GM12878 (cell line): ENCODE measurements at regions of chr11 and their contacts with region 1.

Region 1: DNA sequence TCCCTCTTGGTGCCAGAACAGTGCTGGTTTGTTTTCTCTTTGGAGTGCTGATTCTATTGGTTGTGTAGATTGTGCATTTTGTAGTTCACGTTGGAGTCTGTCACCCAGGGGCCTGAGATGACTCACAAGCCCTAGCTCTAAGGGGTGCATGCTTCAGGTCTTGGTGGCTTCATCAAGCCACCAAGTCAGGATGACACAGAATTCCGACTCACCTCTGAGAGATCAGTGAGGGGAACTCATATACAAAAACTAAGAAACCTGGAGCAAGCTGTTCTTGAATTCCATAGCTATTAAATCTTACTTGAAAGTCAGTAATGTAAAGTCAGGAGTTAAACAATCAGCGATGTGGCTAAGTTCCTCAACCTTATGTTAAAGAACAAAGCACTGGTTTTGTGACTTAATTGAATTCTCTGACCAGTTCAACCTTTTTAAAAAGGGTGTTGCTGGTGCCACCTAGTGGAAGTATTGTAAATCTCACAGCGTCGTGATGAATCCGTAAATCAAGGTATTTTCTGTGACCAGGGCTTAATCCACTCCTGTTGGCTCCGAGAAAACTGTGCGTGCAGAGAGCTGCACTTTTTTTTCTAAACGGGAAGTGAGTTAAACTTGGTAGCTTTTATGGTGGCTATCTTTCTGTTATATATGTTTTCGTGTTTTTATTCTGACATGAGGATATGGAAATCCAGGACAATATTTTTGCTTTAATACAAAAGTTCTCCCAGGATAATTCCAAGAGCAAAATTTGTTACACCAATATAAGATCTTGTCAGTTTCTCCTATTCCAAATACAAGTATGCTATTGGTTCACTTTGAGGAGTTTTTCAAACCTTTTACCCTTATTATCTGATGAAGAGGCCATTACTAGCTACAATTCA is 14.6 kb downstream of the MMP13 start:
- DNase-seq: peak; percentile 37
- ATAC-seq: peak; percentile 92
- H3K4me3 ChIP-seq: no peak overlapping the region
- H3K27ac ChIP-seq: no peak overlapping the region
- H3K4me1 ChIP-seq: no peaks in the 10 kb centered on the region
- H3K27me3 ChIP-seq: no peaks in the 10 kb centered on the region
- CTCF ChIP-seq: peak; percentile 63 to 83 (median 79)
- EP300 ChIP-seq: no peak
- POLR2A ChIP-seq: no peak
- RAD21 ChIP-seq: peak; percentile 81

Region 2: DNA sequence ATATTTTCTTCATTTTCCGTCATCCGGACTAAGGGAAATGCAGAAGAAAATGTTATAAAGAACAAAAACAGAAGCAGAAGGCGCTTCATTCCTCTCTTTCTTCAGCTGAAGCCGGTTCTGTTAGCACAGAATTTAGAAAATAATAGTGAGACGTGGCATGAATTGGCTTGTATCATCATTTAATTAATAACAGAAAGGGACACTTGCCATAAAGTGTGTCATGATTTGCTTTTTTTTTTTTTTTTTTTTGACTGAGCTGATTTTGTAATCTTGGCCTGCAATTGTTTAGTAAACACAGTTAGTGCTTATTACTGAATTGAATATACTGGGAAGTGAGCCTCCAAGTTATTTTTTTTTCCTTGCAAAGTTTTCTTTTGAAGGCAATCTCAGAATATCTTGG is 235.3 kb before region 1 on chr11 and contains the start of gene MMP27:
- CTCF ChIA-PET with region 1: no interaction called
- POLR2A ChIA-PET with region 1: no interaction called
- RAD21 ChIA-PET with region 1: no interaction called
- SMC1A ChIA-PET with region 1: no interaction called
- in situ Hi-C with region 1: no loop called
- intact Hi-C with region 1: no loop called
- DNase-seq: no peak
- ATAC-seq: no peak
- H3K4me3 ChIP-seq: no peak within 1 kb of the TSS
- H3K27ac ChIP-seq: no peak within 1 kb of the TSS
- H3K4me1 ChIP-seq: no peaks in the 10 kb centered on the region
- H3K27me3 ChIP-seq: peaks cover 0 to 2% of the 10 kb centered on the region in 2 experiments; a peak in 1 of 4 replicates
- CTCF ChIP-seq: no peak
- EP300 ChIP-seq: no peak
- POLR2A ChIP-seq: no peak
- RAD21 ChIP-seq: no peak
- polyA plus RNA-seq, gene MMP27: not detected

Region 3: GRCh38 chr11:102794447-102794781 is 146.5 kb before region 1 on chr11:
- CTCF ChIA-PET with region 1: interaction called, 17 read pairs
- POLR2A ChIA-PET with region 1: no interaction called
- RAD21 ChIA-PET with region 1: interaction called, 4 read pairs
- SMC1A ChIA-PET with region 1: interaction called, 13 read pairs
- in situ Hi-C with region 1: no loop called
- intact Hi-C with region 1: loop called (anchors 1 kb)
- DNase-seq: no peak
- ATAC-seq: peak; percentile 99
- H3K4me3 ChIP-seq: no peak overlapping the region
- H3K27ac ChIP-seq: no peak overlapping the region
- H3K4me1 ChIP-seq: no peaks in the 10 kb centered on the region
- H3K27me3 ChIP-seq: no peaks in the 10 kb centered on the region; a peak in 1 of 4 replicates
- CTCF ChIP-seq: peak; percentile 57 to 66 (median 57)
- EP300 ChIP-seq: no peak
- POLR2A ChIP-seq: no peak
- RAD21 ChIP-seq: peak; percentile 55

Region 4: DNA sequence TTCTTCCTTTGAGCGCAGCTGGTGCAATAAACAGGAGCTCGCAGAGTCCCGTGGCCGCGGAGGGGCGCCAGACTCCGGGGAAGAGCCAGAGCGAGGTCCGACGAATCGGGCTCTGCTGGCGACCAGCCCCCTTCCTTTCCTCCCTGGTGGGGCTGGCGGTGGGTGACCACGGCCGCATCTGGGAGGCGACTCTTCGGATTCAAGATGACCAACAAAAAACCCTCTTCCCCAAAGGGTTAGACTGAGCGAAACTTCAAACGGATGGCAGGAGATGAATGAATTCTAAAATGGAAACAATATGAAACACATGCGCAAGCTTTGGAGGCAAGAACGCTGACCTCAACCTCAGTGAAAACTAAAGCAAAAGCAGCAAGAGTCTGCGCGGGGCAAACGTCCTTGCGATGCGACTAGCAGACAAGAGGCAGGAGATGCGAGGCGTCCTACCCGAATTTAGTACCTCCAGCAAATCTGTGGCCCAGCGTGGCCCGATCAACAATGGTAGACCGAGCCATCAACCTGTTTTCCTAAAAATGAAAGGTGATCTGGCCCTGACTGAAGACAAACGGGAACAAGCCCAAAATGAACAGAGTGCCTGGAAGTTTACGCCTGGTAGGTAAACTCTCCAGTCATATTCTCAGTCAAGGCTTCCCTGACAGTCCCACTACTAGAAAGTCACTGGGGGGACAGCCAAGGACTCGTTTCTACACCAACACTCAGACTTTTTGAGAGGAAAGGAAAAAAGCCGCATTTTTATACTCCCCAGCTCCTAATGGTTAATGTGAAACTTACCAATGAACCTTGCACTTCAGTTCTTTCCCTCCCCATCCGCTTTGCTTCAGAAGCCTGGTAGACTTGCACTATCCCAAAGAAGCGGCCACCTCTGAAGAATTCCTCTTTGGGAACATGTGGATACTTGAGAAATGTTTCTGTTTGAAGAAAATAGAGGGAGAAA is 109.2 kb before region 1 on chr11:
- CTCF ChIA-PET with region 1: interaction called, 53 read pairs
- POLR2A ChIA-PET with region 1: no interaction called
- RAD21 ChIA-PET with region 1: interaction called, 20 read pairs
- SMC1A ChIA-PET with region 1: interaction called, 28 read pairs
- in situ Hi-C with region 1: no loop called
- intact Hi-C with region 1: loop called (anchors 1 kb)
- DNase-seq: no peak
- ATAC-seq: peak; percentile 80
- H3K4me3 ChIP-seq: no peak overlapping the region
- H3K27ac ChIP-seq: no peak overlapping the region
- H3K4me1 ChIP-seq: no peaks in the 10 kb centered on the region
- H3K27me3 ChIP-seq: peaks cover 0 to 9% of the 10 kb centered on the region in 2 experiments; a peak in 2 of 4 replicates
- CTCF ChIP-seq: peak; percentile 31 to 60 (median 53); a peak in 5 of 6 replicates
- EP300 ChIP-seq: no peak
- POLR2A ChIP-seq: no peak
- RAD21 ChIP-seq: peak; percentile 41; the same call in 1 of the 2 replicates

Region 5: DNA sequence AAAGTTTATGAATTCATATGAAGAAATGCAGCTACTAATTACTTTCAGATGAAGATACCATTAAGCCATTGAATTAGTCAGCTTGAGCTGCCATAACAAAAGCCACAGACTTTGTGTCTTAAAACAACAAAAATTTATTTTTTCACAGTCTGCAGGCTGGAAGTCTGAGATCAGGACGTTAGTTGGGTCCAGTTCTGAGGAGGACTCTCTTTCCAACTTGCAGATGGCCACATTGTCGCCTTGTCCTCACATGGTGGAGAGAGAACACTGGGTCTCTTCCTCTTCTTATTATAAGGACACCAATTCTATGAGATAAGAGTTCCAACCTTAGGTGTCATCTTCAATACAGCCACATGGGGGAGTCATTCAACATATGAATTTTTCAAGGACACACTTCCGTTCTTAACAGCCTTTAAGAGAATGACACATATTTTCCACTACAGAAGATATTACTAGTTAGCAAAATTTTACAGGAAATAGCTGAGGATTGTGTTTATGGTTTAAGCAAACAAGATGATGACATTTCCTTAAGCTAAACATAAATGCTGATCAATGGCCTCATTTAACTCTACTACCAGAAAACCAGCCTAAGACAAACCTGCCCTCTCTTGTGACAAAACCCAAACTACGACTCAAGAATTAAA is 95.0 kb after region 1 on chr11:
- CTCF ChIA-PET with region 1: interaction called, 13 read pairs
- POLR2A ChIA-PET with region 1: interaction called, 3 read pairs
- RAD21 ChIA-PET with region 1: interaction called, 5 read pairs
- SMC1A ChIA-PET with region 1: interaction called, 17 read pairs
- in situ Hi-C with region 1: no loop called
- intact Hi-C with region 1: no loop called
- DNase-seq: peak; percentile 55
- ATAC-seq: peak; percentile 95
- H3K4me3 ChIP-seq: no peak overlapping the region
- H3K27ac ChIP-seq: no peak overlapping the region
- H3K4me1 ChIP-seq: no peaks in the 10 kb centered on the region
- H3K27me3 ChIP-seq: no peaks in the 10 kb centered on the region
- CTCF ChIP-seq: peak; percentile 61 to 67 (median 62)
- EP300 ChIP-seq: no peak
- POLR2A ChIP-seq: no peak
- RAD21 ChIP-seq: peak; percentile 64